Head of caudate nucleus (tissue), 42 donors: ENCODE measurements at regions of chr5 and their contacts with region 1.

Region 1: GRCh38 chr5:88486431-88486830 is 217.8 kb upstream of the TMEM161B start:
- DNase-seq: no peak

Region 2: GRCh38 chr5:88398316-88398715 is 88.1 kb before region 1 on chr5:
- intact Hi-C with region 1: loop called (anchors 5 kb)
- DNase-seq: peak in 3 of 42 donors; percentile 35 to 65 (median 47)

Region 3: GRCh38 chr5:88425124-88425523 is 61.3 kb before region 1 on chr5:
- intact Hi-C with region 1: no loop called
- DNase-seq: no peak